Endothelial cell of umbilical vein (primary cell): ENCODE measurements at regions of chr15 and their contacts with region 1.

Region 1: DNA sequence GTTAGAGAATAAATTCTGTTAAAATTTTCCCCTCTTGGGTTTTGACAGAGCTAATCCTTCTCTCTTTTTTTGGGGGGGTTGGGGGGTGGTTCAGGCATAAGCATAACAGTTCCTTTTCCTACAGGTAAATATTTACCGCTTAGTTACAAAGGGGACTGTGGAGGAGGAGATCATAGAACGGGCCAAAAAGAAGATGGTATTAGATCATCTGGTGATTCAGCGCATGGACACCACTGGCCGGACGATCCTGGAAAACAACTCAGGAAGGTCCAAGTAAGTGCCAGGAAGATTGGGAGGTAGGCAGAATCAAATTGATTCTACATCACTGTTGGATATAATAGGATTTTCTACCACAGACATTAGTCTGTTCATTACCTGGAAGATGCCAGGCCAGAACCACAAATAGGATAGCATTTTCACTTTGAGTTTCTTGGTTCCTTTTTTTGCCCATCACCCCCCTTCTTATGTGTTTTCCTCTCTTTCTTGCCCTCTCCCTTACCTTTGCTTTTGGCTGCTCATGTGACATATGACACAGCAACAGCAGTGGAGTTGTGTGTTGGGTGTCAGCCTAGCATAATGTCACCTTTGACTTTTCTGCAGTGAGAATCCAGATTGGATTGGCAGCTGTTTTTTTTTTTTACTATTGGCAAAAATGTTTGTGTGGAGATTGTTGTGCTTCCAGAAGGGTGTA is 79.0 kb downstream of the CHD2 start:
- DNase-seq: no peak
- H3K4me3 ChIP-seq: no peak overlapping the region
- H3K27ac ChIP-seq: no peak overlapping the region
- H3K4me1 ChIP-seq: peaks cover 20% of the 10 kb centered on the region
- H3K27me3 ChIP-seq: no peaks in the 10 kb centered on the region
- CTCF ChIP-seq: no peak
- POLR2A ChIP-seq: no peak

Region 2: GRCh38 chr15:92989470-92989869 is 10.3 kb after region 1 on chr15:
- CTCF ChIA-PET with region 1: interaction called, 4 read pairs
- POLR2A ChIA-PET with region 1: interaction called, 3 read pairs
- dilution Hi-C with region 1: no loop called
- intact Hi-C with region 1: loop called (anchors 2 kb)
- DNase-seq: no peak
- H3K4me3 ChIP-seq: no peak overlapping the region
- H3K27ac ChIP-seq: no peak overlapping the region
- H3K4me1 ChIP-seq: no peaks in the 10 kb centered on the region
- H3K27me3 ChIP-seq: no peaks in the 10 kb centered on the region
- CTCF ChIP-seq: no peak
- POLR2A ChIP-seq: no peak